ENCODE measurements at regions of chr17 and their contacts with region 1.

Region 1: GRCh38 chr17:781805-782731 is at the starts of genes GLOD4 and MRM3:
- DNase-seq: peak; percentile 92
- H3K4me3 Mint-ChIP-seq: peak within 1 kb of the TSS; percentile 95
- H3K27ac Mint-ChIP-seq: peak within 1 kb of the TSS; percentile 92
- H3K4me1 Mint-ChIP-seq: peaks cover 27% of the 10 kb centered on the region
- H3K27me3 Mint-ChIP-seq: no peaks in the 10 kb centered on the region
- total RNA-seq, gene GLOD4: 84.8 and 98.0 TPM in 2 replicates
- total RNA-seq, gene MRM3: 28.4 and 29.3 TPM in 2 replicates

Region 2: DNA sequence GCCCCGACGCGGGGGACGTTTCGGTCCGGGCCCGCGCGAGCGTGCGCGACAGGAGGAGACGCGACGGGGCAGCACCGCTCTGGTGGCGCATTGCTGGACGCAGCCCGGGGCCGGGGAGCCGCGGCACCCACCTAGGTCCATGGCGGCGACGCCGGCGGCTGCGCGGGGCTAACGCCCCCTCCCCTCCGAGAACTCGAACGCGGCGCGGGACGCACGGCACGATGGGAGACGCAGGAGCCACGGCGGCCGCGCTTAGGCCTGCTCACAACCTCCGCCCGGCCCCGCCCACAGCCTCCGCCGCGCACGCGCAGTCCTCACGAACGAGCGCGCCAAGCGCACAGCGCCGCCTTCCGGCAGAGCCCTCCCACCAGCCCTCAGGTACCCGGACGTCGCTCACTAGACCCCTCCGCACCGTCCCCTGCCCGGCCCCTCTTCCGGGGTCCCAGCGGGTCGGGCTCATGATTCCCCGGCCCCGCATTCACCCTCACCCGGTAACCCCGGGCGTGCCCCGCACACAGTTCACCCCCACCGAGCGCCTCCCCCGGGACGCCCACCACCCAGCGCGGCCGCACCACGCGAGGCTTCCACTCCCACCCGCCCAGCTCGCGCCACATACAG is 30.0 kb before region 1 on chr17 and contains the start of gene GEMIN4:
- intact Hi-C with region 1: loop called (anchors 2 kb)
- DNase-seq: peak; percentile 97
- H3K4me3 Mint-ChIP-seq: peak within 1 kb of the TSS; percentile 98
- H3K27ac Mint-ChIP-seq: peak within 1 kb of the TSS; percentile 95
- H3K4me1 Mint-ChIP-seq: peaks cover 26% of the 10 kb centered on the region
- H3K27me3 Mint-ChIP-seq: no peaks in the 10 kb centered on the region
- total RNA-seq, gene GEMIN4: 62.8 and 64.2 TPM in 2 replicates

Region 3: GRCh38 chr17:996554-997344 is 214.7 kb after region 1 on chr17 and contains the start of gene TIMM22:
- intact Hi-C with region 1: loop called (anchors 1 kb)
- DNase-seq: peak; percentile 91
- H3K4me3 Mint-ChIP-seq: peak within 1 kb of the TSS; percentile 95
- H3K27ac Mint-ChIP-seq: peak within 1 kb of the TSS; percentile 95
- H3K4me1 Mint-ChIP-seq: peaks cover 11% of the 10 kb centered on the region
- H3K27me3 Mint-ChIP-seq: no peaks in the 10 kb centered on the region
- total RNA-seq, gene TIMM22: 13.6 and 15.0 TPM in 2 replicates

Measured in activated T-helper 2 cell treated with anti-CD3 and anti-CD28 coated beads, Interferon-gamma antibody, Interleukin-2, Interleukin-4, amounts not matched to agents 10 μg/mL and 5 μg/mL and 100 μg/mL, durations not matched to agents 14 hours and 24 hours and 36 hours (primary cell).